ENCODE measurements at regions of chr7 and their contacts with region 1.

Region 1: GRCh38 chr7:87416682-87417587 is 58.5 kb downstream of the ABCB4 start:
- DNase-seq: peak; percentile 18 to 32
- ATAC-seq: peak; percentile 45 to 53
- H3K4me3 ChIP-seq: no peak overlapping the region
- H3K27ac ChIP-seq: no peak overlapping the region
- H3K4me1 ChIP-seq: peaks cover 13 to 14% of the 10 kb centered on the region in 2 donors
- H3K27me3 ChIP-seq: no peaks in the 10 kb centered on the region
- CTCF ChIP-seq: peak; percentile 60 to 69 (median 64)
- POLR2A ChIP-seq: no peak

Region 2: GRCh38 chr7:87252166-87252565 is 164.8 kb before region 1 on chr7:
- in situ Hi-C with region 1: no loop called
- intact Hi-C with region 1: no loop called
- DNase-seq: no peak
- ATAC-seq: no peak
- H3K4me3 ChIP-seq: no peak overlapping the region
- H3K27ac ChIP-seq: no peak overlapping the region
- H3K4me1 ChIP-seq: no peaks in the 10 kb centered on the region
- H3K27me3 ChIP-seq: no peaks in the 10 kb centered on the region
- CTCF ChIP-seq: no peak
- POLR2A ChIP-seq: no peak

Region 3: DNA sequence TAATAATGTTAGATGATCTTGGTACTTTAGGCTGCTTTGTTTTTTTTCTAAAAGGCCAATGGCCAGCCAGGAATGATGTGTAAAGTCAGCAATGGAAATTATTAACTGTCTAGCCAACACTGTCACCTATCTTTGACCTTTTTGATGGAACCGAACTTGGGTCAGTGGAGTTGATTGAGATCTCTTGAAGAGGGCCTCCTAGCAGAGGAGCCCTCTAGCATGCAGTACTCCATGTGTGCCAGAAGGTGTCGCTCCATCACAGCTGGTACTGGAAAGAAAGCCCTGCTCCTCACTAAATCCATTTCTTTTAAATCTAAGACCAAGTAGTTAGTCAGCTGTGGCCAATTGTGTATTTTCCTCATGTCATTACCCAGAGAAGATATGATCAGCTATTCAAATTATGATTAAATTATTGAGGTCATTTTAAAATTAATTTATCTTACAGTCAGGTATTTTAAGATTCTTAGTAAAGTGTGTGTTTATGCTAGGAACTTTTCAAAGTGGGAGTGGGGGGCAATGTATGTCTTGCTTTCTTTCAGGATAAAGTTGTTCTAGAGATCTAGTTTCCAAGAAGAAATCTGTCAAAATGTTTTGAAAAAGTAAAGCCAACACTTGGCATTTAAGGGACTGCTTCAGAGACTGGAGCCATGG is 104.6 kb before region 1 on chr7:
- in situ Hi-C with region 1: loop called (anchors 5 kb)
- intact Hi-C with region 1: loop called (anchors 1 kb)
- DNase-seq: peak in 1 of 2 donors; percentile 23
- ATAC-seq: peak; percentile 74 to 88
- H3K4me3 ChIP-seq: no peak overlapping the region
- H3K27ac ChIP-seq: no peak overlapping the region
- H3K4me1 ChIP-seq: no peaks in the 10 kb centered on the region
- H3K27me3 ChIP-seq: no peaks in the 10 kb centered on the region
- CTCF ChIP-seq: peak; percentile 86 to 97 (median 92)
- POLR2A ChIP-seq: no peak

Region 4: DNA sequence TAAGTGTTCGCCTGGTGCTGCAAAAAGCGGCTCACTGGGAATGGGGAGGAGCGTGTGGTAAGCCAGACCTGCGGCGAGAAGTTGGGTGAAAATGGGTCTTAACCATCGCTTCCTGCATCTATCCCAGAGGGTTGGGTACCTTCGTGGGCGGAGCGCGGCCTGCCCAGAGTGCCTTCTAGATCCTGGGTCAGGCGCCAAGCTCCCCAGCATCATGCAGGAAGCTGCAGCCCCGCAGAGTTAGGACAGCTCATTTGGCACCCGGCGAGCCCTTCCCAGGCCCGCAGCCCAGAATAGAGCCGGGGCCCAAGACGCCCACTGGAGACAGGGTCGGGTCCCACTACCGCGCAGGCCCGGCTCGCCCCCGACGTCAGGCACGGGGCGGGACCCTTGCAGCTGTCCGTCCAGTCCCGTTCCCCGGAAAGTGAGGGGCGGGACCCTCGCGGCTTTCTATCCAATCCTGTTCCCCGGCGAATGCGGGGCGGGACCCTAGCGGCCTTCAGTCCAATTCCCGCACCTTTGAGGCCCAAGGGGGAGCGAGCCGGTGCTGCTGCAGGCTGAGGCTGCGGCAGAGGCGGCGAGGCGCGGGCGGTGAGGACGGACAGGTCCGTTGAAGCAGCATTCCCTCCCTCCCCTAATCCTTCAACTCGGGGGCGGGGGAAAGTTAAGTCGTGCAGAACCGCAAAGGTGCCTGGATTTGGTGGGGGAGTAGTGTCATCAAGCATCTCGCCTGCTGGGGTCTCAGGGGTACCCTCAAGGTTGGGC is 71.6 kb before region 1 on chr7 and contains the start of gene CROT:
- in situ Hi-C with region 1: no loop called
- intact Hi-C with region 1: loop called (anchors 1 kb)
- DNase-seq: peak; percentile 90 to 91
- ATAC-seq: peak; percentile 99
- H3K4me3 ChIP-seq: peak within 1 kb of the TSS; percentile 69 to 83 (median 76)
- H3K27ac ChIP-seq: peak within 1 kb of the TSS; percentile 73 to 83 (median 81)
- H3K4me1 ChIP-seq: peaks cover 6 to 19% of the 10 kb centered on the region in 2 donors
- H3K27me3 ChIP-seq: no peaks in the 10 kb centered on the region
- CTCF ChIP-seq: no peak
- POLR2A ChIP-seq: peak; percentile 29 to 53
- total RNA-seq, gene CROT: 3.6 to 16.3 (median 7.9) TPM